Heart right ventricle (tissue), 16 donors: ENCODE measurements at regions of chr2 and their contacts with region 1.

Region 1: DNA sequence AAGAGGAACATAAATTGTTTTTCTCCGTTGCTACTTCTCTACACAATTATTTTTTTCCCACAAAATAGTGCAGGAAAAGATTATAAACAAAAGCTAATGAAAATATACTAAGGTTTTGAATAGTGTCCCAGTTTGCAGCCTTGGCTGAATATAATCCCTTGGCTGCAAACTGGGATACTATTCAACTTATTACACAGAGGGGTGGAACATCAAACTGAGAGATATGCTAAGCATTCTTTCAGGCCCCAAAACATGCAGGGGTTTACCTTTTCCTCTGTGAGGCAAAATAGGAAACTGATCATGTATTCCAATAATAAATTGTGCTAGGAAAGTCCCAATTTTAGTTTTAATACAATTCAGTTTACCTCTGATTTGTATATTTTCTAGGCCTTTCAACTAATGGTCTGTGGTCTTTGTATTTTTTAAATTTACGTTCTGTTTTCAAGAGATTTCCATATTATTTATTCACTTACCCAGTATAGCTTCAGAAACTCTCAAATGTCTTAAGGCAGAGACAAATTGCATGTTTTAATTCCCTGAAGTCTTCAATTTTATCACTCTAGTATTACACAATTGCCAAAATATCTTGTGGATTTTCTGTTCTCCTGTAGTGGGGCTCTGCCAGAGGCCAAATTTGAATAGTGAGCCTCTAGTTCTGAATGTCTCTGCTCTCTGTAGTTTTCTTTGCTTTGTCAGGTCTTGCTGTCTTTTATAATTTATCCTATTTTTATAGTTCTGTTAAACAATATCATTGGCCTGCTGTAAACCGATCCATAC is 63.9 kb downstream of the PPP1R1C start:
- DNase-seq: no peak
- ATAC-seq: peak in 7 of 8 donors; percentile 27 to 84 (median 64)
- H3K4me3 ChIP-seq: no peak overlapping the region
- H3K27ac ChIP-seq: peak overlapping the region in 5 of 10 donors; percentile 17 to 63 (median 31)
- H3K4me1 ChIP-seq: peaks cover 3 to 52% (median 10%) of the 10 kb centered on the region in 9 donors
- H3K27me3 ChIP-seq: no peaks in the 10 kb centered on the region
- CTCF ChIP-seq: no peak

Region 2: DNA sequence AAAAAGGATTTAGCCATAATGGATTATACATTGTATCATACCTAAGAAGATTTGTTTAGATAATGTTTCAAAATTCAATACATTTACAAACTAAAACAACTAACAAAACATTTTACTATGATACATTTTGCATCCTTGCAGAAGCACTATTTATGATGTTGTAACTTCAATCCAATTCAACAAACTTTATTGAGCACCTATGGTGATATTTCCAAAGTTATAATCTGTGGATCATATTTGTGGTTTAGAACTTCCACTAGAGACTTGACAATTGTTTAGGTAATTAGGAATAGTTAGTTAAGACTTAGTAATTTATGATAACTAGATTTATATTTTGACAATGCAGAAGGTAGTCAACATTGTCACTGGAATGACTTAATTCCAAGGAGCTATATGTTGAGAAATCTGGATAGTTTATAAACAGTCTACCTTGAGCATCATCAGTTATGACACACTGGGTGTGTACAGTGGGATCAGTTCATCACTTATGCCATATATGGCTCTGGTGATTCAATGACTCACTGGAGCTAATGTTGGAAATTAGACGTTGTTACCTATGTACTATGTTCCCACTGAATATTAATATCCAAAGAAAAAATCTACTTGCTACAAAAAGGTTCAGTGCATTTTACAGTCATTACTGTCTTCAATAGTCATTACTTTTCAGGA is 192.2 kb before region 1 on chr2:
- intact Hi-C with region 1: no loop called
- DNase-seq: no peak
- ATAC-seq: no peak
- H3K4me3 ChIP-seq: no peak overlapping the region
- H3K27ac ChIP-seq: no peak overlapping the region
- H3K4me1 ChIP-seq: no peaks in the 10 kb centered on the region
- H3K27me3 ChIP-seq: no peaks in the 10 kb centered on the region
- CTCF ChIP-seq: no peak

Region 3: DNA sequence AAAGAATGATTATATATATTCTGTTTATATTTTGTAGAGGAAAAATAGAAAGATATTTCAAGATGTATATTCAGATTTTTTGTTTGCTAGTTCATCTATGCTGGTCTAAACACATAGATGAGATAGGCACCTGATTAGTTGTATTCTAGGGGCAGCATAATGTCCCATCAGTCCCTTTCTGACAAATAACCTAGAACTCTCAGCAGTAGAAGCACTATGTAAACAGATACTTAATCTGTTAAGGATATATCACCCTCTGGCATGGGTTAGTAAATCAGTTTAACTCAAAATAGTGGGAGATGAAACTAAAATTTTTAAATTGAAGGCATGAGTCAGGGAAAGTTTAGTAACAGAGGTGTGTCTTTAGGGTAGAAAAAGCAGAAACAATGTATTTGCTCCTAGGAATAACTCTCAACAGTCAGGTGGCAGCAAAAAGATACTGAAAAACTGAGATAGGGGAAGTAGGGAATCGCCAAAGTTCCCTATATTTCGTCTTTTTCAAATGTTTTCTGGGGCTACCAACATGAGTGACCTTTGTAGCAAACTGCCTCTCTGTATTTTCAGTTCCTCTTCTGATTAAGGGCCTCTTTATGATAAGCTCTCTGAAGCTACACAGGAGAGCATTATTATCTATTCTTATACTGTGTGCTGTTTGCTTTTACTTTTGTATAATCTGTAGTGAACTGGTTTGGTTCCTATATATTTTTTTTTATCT is 58.2 kb before region 1 on chr2:
- intact Hi-C with region 1: loop called in 3 of 10 experiments (anchors 10 kb)
- DNase-seq: no peak
- ATAC-seq: peak in 3 of 8 donors; percentile 45 to 58 (median 47)
- H3K4me3 ChIP-seq: no peak overlapping the region
- H3K27ac ChIP-seq: peak overlapping the region in 8 of 10 donors; percentile 20 to 77 (median 66)
- H3K4me1 ChIP-seq: peaks cover 0 to 31% (median 8%) of the 10 kb centered on the region in 9 donors
- H3K27me3 ChIP-seq: no peaks in the 10 kb centered on the region
- CTCF ChIP-seq: no peak